HEK293 (cell line): ENCODE measurements at regions of chr1 and their contacts with region 1.

Region 1: DNA sequence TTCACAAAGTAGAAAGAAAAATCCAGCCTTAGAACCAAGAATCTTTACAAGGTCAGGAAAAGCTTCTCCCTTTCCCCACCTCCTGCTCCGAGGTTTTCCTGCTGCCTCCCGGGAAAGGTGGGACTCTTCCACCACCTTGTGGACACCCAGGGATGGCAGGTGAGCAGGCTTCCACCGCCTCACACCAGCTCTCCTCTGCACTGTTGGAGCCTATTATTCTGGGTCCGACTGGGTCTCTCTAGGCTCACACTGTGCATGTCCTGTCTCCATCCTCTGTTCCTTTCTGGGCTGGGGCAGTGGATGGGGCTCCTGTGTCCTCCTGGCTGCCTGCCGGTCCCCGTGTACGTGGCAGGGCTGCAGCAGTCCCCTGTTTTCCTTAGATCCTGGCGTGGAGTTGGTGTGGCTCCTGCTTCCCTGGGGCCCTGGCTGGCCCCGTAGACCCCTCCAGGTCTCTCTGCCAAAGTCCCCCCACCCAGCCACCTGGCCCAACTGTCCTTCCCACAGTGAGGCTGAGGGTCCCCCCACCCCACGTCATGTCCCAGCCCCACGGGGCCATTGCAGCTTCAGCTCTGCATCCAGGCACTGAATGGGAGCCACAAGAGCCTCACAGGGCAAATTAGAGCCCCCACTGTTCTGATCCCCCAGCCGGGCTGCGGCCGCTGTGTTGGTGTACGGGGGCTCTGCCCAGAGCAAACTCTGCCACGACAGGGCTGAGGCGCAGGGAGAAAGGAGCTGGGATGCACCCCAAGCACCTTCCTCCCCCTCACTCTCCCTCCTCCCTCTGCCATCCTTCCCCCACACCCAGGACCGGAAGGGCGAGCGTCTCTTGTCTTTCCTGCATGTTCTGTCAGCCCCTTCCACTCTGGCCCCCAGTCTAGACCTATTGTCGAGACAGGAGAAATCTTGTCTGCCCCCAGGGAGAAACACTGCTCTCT is 3.3 kb upstream of the SLC45A1 start:
- H3K4me3 ChIP-seq: no peak overlapping the region
- H3K27ac ChIP-seq: no peak overlapping the region
- H3K4me1 ChIP-seq: no peaks in the 10 kb centered on the region
- CTCF ChIP-seq: peak; percentile 85

Region 2: GRCh38 chr1:7983086-7983778 is 331.4 kb before region 1 on chr1:
- CTCF ChIA-PET with region 1: interaction called, 73 read pairs
- POLR2A ChIA-PET with region 1: no interaction called
- H3K4me3 ChIP-seq: no peak overlapping the region
- H3K27ac ChIP-seq: no peak overlapping the region
- H3K4me1 ChIP-seq: no peaks in the 10 kb centered on the region
- CTCF ChIP-seq: no peak

Region 3: DNA sequence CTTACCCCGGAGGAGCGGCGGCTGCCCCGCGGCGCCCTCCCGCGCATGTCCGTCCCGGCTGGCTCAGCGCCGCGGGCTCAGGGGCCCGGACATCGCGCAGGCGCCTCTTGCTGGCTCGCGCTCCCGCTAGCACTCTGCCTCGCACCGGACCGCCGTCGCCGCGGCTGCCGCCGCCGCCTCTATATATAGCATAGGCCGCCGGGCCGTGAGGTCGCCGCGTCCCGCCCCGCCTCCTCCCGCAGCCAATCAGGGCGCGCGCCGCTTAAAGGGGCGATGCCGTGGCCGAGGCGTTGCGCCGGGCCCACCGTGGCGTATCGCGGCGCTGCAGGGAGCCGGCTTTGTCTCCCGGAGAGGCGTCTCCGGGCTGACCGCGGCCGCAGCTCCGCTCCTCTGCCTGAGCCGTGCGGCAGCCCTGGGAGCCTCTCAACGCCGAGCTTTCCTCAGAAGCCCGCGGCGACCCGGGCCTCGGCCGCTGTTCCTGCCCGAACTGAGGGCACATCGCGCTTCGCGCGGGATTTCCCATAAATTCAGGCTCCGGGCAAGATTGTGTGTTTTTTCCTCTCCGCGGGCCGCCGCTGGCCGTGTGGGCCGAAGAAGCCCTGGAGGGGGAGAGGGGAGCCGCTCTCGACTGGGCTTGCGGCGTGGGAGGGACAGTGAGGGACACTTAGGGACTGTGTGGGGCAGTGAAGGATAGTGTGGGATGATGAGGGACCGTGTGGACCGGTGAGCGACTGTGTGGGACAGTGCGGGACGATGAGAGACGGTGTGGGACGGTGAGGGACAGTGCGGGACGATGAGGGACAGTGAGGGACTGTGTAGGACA is 288.2 kb before region 1 on chr1 and contains the start of gene ERRFI1:
- CTCF ChIA-PET with region 1: interaction called, 44 read pairs
- POLR2A ChIA-PET with region 1: interaction called, 8 read pairs
- H3K4me3 ChIP-seq: peak within 1 kb of the TSS; percentile 85
- H3K27ac ChIP-seq: peak within 1 kb of the TSS; percentile 67
- H3K4me1 ChIP-seq: peaks cover 27% of the 10 kb centered on the region
- CTCF ChIP-seq: peak; percentile 6; the same call in 1 of the 2 replicates

Region 4: DNA sequence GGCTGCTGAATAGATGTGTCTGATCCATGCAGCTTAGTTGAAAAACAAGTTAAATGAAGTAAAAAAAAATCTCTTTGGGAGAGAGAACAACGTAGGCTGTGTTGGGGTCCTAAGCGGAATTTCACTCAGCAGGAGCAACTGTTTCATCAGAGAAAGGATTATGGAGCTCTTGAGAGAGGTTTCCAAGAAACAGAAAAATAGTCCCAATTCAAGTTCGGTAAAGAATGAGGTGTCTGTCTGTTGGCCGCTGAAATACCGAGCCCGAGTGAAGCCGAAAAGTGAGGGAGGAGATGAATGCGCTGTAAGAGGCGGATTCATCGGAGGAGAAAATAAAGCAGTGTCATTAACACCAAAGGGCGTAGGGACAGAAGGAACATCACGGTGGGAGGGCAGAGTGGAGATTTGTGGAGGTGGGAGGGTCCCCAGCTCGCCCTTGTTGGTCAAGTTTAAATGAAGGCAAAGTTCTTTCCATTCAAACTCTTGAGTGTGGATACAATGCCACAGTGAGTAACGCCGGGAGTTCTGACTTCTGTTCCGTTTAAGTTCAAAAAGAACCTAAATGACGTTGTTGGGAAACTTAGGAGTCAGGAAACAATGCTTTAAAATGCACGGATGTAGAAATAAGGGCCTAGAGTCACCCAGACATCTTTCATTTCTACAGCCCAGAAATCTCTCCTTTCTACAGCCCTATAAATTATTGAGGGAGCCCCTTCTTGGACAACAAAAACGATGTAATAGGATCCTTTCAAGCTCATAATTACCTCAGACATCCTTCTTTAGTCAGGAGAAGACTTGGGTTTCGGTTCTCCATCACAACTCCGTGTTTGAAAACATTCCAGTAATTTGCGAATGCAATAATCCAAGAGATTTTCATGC is 12.3 kb before region 1 on chr1:
- CTCF ChIA-PET with region 1: interaction called, 34 read pairs
- POLR2A ChIA-PET with region 1: no interaction called
- H3K4me3 ChIP-seq: no peak overlapping the region
- H3K27ac ChIP-seq: no peak overlapping the region
- H3K4me1 ChIP-seq: no peaks in the 10 kb centered on the region
- CTCF ChIP-seq: no peak

Region 5: GRCh38 chr1:8482979-8483391 is 168.4 kb after region 1 on chr1:
- CTCF ChIA-PET with region 1: no interaction called
- POLR2A ChIA-PET with region 1: no interaction called
- H3K4me3 ChIP-seq: no peak overlapping the region
- H3K27ac ChIP-seq: no peak overlapping the region
- H3K4me1 ChIP-seq: no peaks in the 10 kb centered on the region
- CTCF ChIP-seq: no peak